Activated naive CD4-positive, alpha-beta T cell treated with anti-CD3 and anti-CD28 coated beads, Interleukin-2, amount 10 ng/mL, durations not matched to agents 7 days and 5 days (primary cell): ENCODE measurements at regions of chr15 and their contacts with region 1.

Region 1: DNA sequence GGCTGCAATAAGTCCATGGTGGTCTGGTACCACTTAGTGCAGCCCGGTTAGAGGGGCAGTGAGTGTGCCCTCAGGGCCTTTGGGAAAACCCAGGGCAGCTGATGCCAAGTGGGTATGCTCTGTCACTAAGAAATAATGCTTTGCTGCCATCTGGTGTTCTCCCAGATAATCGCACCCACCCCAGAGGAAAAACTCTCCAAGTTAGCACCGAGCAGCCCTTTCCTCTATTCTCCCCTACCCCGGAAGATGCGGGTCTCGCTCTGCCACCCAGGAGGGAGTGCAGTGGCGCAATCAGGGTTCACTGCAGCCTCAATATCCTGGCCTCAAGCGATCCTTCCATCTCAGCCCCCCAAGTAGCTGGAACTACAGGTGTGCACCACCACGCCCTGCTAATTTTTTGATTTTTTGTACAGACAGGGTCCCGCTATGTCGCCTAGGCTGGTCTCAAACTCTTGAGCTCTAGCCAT is 21.3 kb upstream of the DAPK2 start:
- DNase-seq: peak; percentile 78
- H3K4me3 Mint-ChIP-seq: no peak overlapping the region
- H3K27ac Mint-ChIP-seq: no peak overlapping the region
- H3K4me1 Mint-ChIP-seq: peaks cover 15% of the 10 kb centered on the region
- H3K27me3 Mint-ChIP-seq: no peaks in the 10 kb centered on the region

Region 2: DNA sequence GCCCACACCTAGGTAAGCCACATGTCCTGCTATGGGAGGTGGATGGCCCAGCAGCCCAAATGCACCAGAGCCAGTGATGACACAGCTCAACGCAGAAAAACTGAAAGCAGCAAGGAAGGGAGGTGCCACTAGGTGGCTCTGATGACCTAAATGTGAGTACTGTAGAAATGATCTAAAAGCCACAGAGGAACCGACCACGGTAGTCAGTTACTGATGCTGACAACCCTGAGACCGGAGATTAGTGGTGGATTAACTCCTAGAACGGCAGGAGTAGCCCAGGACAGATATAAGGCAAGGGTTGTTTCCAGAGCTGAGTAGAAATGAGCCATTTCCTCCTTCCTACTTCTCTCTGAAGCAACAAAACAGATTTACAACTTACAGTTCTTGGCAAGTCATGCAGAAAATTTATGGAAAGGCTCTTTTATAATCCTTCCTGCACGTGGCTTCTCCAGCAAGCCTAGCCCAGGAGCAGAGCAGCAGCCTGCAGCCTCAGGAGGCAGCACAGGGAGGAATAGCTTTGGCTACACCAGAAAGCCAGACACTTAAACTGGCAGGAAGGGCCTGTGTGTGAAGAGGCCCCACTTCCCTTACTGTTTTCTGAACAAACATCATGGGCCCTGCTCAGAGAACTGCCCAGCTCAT is 457.3 kb before region 1 on chr15:
- CTCF ChIA-PET with region 1: interaction called, 114 read pairs
- DNase-seq: peak; percentile 88
- H3K4me3 Mint-ChIP-seq: no peak overlapping the region
- H3K27ac Mint-ChIP-seq: peak overlapping the region; percentile 90
- H3K4me1 Mint-ChIP-seq: peaks cover 42% of the 10 kb centered on the region
- H3K27me3 Mint-ChIP-seq: no peaks in the 10 kb centered on the region

Region 3: GRCh38 chr15:63999177-63999576 is 68.4 kb before region 1 on chr15:
- CTCF ChIA-PET with region 1: no interaction called
- DNase-seq: no peak
- H3K4me3 Mint-ChIP-seq: no peak overlapping the region
- H3K27ac Mint-ChIP-seq: no peak overlapping the region
- H3K4me1 Mint-ChIP-seq: peaks cover 6% of the 10 kb centered on the region
- H3K27me3 Mint-ChIP-seq: peaks cover 44% of the 10 kb centered on the region

Region 4: GRCh38 chr15:64046347-64047153 is 21.0 kb before region 1 on chr15 and contains the start of gene DAPK2:
- CTCF ChIA-PET with region 1: interaction called, 11 read pairs
- DNase-seq: peak; percentile 73
- H3K4me3 Mint-ChIP-seq: peak within 1 kb of the TSS; percentile 64
- H3K27ac Mint-ChIP-seq: peak within 1 kb of the TSS; percentile 19
- H3K4me1 Mint-ChIP-seq: peaks cover 4% of the 10 kb centered on the region
- H3K27me3 Mint-ChIP-seq: peaks cover 70% of the 10 kb centered on the region

Region 5: DNA sequence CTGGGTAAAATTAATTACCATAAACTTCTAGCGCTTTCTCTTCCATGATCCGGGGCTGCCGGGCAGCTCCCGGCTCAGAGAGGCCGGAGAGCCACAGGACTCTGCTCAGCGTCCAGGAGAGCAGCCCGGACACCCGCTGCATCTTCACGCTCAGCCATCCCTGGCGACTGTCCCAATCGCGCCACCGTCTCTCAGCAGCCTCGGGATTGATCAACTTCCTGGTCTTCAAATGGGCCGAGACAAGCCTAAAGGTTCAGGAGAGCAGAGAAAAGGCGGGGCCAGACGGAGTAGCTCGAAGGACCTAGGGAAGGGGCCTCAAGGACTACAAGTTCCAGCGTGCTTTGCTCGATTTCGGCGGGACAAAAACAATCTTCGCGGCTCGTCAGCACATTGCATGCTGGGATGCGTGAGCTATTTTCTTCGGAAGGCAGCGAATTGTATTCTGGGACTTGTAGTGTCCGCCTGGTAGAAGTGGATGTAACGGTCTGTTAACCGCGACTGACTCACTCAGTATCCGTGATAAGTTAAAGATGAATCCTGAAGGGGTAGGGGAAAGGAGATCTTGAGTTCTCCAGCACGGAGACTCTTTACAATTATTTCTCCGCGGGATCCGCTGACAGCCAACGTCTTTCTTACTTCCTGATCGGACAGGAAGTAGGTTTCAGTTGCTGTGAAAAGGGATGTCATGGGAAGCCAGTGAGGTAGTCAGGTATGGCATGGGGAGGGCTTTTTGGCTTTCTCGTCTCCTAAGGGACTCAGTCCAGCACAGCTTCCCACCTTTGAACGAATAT is 26.2 kb after region 1 on chr15 and contains the start of gene CIAO2A:
- CTCF ChIA-PET with region 1: interaction called, 10 read pairs
- DNase-seq: peak; percentile 98
- H3K4me3 Mint-ChIP-seq: peak within 1 kb of the TSS; percentile 95
- H3K27ac Mint-ChIP-seq: peak within 1 kb of the TSS; percentile 98
- H3K4me1 Mint-ChIP-seq: peaks cover 80% of the 10 kb centered on the region
- H3K27me3 Mint-ChIP-seq: no peaks in the 10 kb centered on the region

Region 6: GRCh38 chr15:64141798-64142512 is 74.4 kb after region 1 on chr15:
- CTCF ChIA-PET with region 1: no interaction called
- DNase-seq: no peak
- H3K4me3 Mint-ChIP-seq: no peak overlapping the region
- H3K27ac Mint-ChIP-seq: peak overlapping the region; percentile 25
- H3K4me1 Mint-ChIP-seq: no peaks in the 10 kb centered on the region
- H3K27me3 Mint-ChIP-seq: no peaks in the 10 kb centered on the region

Region 7: DNA sequence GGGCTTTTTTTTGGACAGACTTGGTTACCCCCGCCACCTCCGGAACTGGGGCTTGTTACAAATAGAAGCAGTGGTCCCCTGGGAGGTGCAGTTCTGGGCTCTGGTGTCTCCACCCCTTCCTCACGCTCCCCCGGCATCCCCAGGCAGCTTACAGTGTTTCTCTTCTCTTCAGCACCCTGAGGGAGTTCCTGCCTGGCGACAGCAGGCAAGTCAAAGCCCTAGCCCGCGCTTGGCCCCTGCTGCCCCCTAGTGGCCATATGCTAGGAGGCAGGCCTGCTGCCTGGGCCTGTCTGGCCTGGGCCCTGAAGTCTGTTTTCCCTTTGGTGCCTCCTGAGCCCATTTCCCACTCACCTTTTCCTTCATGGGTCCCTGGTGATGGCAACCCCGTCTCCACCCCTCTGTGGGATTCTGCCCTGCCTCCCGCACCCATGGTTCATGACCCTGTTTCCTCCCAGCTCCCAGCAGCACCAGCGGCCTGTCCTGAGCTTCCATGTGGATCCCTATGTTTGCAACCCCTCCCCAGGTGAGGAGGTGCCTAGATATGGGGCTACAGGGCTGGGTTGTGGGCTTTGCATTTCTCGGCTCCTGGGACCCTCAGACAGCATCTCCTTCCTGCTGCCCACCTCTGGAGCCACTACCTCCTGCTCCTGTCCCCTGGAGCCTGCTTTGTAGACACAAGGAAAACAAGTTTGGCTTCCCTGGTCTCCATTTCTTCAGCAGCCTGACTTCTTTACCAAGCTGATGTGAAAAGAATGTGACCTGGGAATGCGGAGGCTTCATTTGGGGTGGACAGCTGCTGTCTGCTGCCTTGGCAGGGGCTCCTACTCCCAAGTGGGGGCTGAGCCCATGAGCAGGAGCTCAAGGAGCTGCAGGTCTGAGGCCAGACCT is 86.1 kb after region 1 on chr15:
- CTCF ChIA-PET with region 1: interaction called, 14 read pairs
- DNase-seq: peak; percentile 95
- H3K4me3 Mint-ChIP-seq: peak overlapping the region; percentile 35
- H3K27ac Mint-ChIP-seq: peak overlapping the region; percentile 80
- H3K4me1 Mint-ChIP-seq: peaks cover 44% of the 10 kb centered on the region
- H3K27me3 Mint-ChIP-seq: peaks cover 42% of the 10 kb centered on the region